ENCODE measurements at regions of chr2 and their contacts with region 1.

Region 1: DNA sequence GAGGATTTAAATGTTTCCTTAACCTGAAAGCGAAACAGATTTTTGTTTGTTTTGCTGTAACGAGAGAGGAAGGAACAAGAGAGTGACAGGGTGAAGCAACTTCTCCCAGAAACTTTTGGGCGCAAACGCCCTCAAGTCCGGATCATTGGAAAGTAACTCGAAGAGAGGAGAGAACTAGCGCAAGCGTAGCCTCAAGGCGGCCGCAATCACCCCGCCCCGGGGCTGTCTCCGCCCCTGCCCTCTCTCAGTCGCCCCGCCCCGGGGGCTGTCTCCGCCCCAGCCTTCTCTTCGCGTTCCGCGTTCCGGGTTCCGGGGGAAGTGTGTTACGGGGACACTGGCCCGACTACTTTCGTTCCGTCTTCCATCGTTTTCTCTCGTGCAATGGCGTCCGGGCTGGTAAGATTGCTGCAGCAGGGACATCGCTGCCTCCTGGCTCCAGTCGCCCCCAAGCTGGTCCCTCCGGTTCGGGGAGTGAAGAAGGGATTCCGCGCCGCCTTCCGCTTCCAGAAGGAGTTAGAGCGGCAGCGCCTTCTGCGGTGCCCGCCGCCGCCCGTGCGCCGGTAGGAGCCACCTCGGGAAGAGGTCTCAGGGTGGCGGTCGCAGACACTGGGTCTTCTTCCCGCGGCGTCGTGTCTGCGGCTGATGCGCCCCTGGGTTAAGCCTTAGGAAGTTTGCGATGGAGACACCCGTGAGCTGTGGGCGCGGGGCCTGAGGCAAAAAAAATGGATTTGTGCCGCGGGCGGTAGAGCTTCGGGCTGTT is at the start of gene MRPL44:
- DNase-seq: peak; percentile 97
- H3K4me3 Mint-ChIP-seq: peak within 1 kb of the TSS; percentile 91
- H3K27ac Mint-ChIP-seq: peak within 1 kb of the TSS; percentile 88
- H3K4me1 Mint-ChIP-seq: peaks cover 80% of the 10 kb centered on the region
- H3K27me3 Mint-ChIP-seq: no peaks in the 10 kb centered on the region
- total RNA-seq, gene MRPL44: 39.1 to 41.3 TPM

Region 2: GRCh38 chr2:223692191-223692947 is 264.9 kb before region 1 on chr2:
- CTCF ChIA-PET with region 1: no interaction called
- intact Hi-C with region 1: loop called (anchors 5 kb)
- DNase-seq: peak; percentile 27
- H3K4me3 Mint-ChIP-seq: no peak overlapping the region
- H3K27ac Mint-ChIP-seq: no peak overlapping the region
- H3K4me1 Mint-ChIP-seq: peaks cover 5% of the 10 kb centered on the region
- H3K27me3 Mint-ChIP-seq: peaks cover 9% of the 10 kb centered on the region

Region 3: GRCh38 chr2:223944703-223945531 is 12.4 kb before region 1 on chr2 and contains the start of gene WDFY1:
- CTCF ChIA-PET with region 1: interaction called, 7 read pairs
- intact Hi-C with region 1: loop called (anchors 1 kb)
- DNase-seq: peak; percentile 82
- H3K4me3 Mint-ChIP-seq: peak within 1 kb of the TSS; percentile 92
- H3K27ac Mint-ChIP-seq: peak within 1 kb of the TSS; percentile 86
- H3K4me1 Mint-ChIP-seq: peaks cover 58% of the 10 kb centered on the region
- H3K27me3 Mint-ChIP-seq: no peaks in the 10 kb centered on the region
- total RNA-seq, gene WDFY1: 39.4 to 39.9 TPM

Region 4: GRCh38 chr2:224025874-224026273 is 68.6 kb after region 1 on chr2:
- CTCF ChIA-PET with region 1: no interaction called
- intact Hi-C with region 1: loop called (anchors 1 kb)
- DNase-seq: peak; percentile 84
- H3K4me3 Mint-ChIP-seq: peak overlapping the region; percentile 64
- H3K27ac Mint-ChIP-seq: peak overlapping the region; percentile 95
- H3K4me1 Mint-ChIP-seq: peaks cover 84% of the 10 kb centered on the region
- H3K27me3 Mint-ChIP-seq: no peaks in the 10 kb centered on the region

Region 5: DNA sequence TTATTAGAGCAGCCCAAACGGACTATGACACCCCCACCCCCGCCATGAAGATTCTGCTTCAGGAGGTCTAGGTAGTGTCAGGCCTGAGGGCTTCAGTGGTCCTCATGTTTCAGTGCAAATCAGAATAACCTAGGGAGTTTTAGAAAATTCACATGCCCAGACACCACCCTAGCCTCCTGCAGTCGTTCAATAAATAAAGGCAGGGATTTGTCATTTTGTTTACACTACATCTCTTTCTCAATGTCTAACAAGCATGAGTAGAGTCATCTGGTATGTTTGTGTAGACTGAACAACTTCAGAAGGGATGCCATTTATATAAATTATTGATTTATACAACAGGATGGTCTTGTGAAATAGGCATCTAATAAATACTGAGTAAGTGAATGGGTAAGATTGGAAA is 193.9 kb after region 1 on chr2:
- CTCF ChIA-PET with region 1: no interaction called
- intact Hi-C with region 1: no loop called
- DNase-seq: no peak
- H3K4me3 Mint-ChIP-seq: no peak overlapping the region
- H3K27ac Mint-ChIP-seq: no peak overlapping the region
- H3K4me1 Mint-ChIP-seq: no peaks in the 10 kb centered on the region
- H3K27me3 Mint-ChIP-seq: peaks cover 2% of the 10 kb centered on the region

Region 6: GRCh38 chr2:224778474-224778877 is 821.2 kb after region 1 on chr2:
- CTCF ChIA-PET with region 1: no interaction called
- intact Hi-C with region 1: loop called (anchors 10 kb)
- DNase-seq: peak; percentile 86
- H3K4me3 Mint-ChIP-seq: no peak overlapping the region
- H3K27ac Mint-ChIP-seq: peak overlapping the region; percentile 22
- H3K4me1 Mint-ChIP-seq: peaks cover 5% of the 10 kb centered on the region
- H3K27me3 Mint-ChIP-seq: no peaks in the 10 kb centered on the region

Measured in activated naive CD4-positive, alpha-beta T cell treated with anti-CD3 and anti-CD28 coated beads for 36 hours (primary cell).